CD4-positive, alpha-beta T cell (primary cell): ENCODE measurements at regions of chr3 and their contacts with region 1.

Region 1: DNA sequence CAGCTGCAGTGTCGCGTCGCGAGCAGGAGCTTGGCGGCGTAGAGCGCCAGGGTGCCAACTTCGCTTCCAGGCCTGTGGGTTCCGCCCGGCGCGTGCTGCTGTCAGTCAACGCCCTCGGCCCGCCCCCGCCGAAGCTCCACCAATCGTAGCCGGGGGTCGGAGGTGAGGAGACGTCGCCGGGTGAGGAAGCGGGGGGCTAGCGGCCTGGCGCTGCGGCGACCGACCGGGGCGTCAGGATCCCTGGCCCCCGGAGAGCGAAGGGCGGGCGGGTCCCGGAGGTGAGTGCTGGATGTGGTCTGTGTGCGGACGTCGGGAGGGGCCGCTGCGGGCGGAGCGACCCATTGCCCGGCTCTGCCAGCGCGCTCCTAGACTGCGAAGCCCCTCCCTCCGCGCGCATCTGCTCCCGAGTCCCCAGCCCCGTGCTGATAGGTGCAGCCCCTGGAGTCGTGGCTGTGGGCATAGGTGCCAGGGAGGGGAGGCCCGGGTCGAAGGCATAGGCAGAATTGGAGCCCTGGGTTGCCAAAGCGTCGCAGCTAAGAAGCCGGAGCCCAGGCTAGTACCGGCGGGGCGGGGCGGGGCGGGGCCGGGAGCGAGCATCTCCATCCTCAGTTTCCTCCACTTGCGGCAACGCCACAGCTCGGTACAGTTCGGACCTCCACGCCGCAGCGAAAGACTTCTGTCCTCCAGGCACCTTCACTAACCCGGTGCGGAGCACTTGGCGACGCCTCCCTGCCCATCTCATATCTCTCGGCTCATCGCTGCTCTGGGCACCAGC is at the start of gene NXPE3:
- DNase-seq: peak; percentile 88 to 96 (median 93)
- ATAC-seq: peak; percentile 91
- H3K4me3 ChIP-seq: peak within 1 kb of the TSS; percentile 89
- H3K4me3 Mint-ChIP-seq: peak within 1 kb of the TSS; percentile 98
- H3K27ac ChIP-seq: peak within 1 kb of the TSS; percentile 87 to 89
- H3K27ac Mint-ChIP-seq: peak within 1 kb of the TSS; percentile 100
- H3K4me1 ChIP-seq: peaks cover 26% of the 10 kb centered on the region
- H3K4me1 Mint-ChIP-seq: peaks cover 62% of the 10 kb centered on the region
- H3K27me3 ChIP-seq: no peaks in the 10 kb centered on the region
- H3K27me3 Mint-ChIP-seq: no peaks in the 10 kb centered on the region
- CTCF ChIP-seq: no peak
- total RNA-seq, gene NXPE3: 37.4 to 37.5 TPM

Region 2: GRCh38 chr3:101656651-101657050 is 122.6 kb before region 1 on chr3:
- CTCF ChIA-PET with region 1: no interaction called
- POLR2A ChIA-PET with region 1: no interaction called
- intact Hi-C with region 1: no loop called
- DNase-seq: no peak
- ATAC-seq: no peak
- H3K4me3 ChIP-seq: no peak overlapping the region
- H3K4me3 Mint-ChIP-seq: no peak overlapping the region
- H3K27ac ChIP-seq: no peak overlapping the region
- H3K27ac Mint-ChIP-seq: no peak overlapping the region
- H3K4me1 ChIP-seq: no peaks in the 10 kb centered on the region
- H3K4me1 Mint-ChIP-seq: peaks cover 5% of the 10 kb centered on the region
- H3K27me3 ChIP-seq: no peaks in the 10 kb centered on the region
- H3K27me3 Mint-ChIP-seq: no peaks in the 10 kb centered on the region
- CTCF ChIP-seq: no peak

Region 3: GRCh38 chr3:101676765-101677435 is 102.3 kb before region 1 on chr3 and contains the start of gene ZBTB11:
- CTCF ChIA-PET with region 1: no interaction called
- POLR2A ChIA-PET with region 1: interaction called, 21 read pairs
- intact Hi-C with region 1: loop called in 1 of 2 experiments (anchors 2 kb)
- DNase-seq: peak; percentile 99 to 100 (median 100)
- ATAC-seq: peak; percentile 67
- H3K4me3 ChIP-seq: peak within 1 kb of the TSS; percentile 71
- H3K4me3 Mint-ChIP-seq: peak within 1 kb of the TSS; percentile 98
- H3K27ac ChIP-seq: peak within 1 kb of the TSS; percentile 97 to 99
- H3K27ac Mint-ChIP-seq: peak within 1 kb of the TSS; percentile 100
- H3K4me1 ChIP-seq: peaks cover 36% of the 10 kb centered on the region
- H3K4me1 Mint-ChIP-seq: peaks cover 60% of the 10 kb centered on the region
- H3K27me3 ChIP-seq: no peaks in the 10 kb centered on the region
- H3K27me3 Mint-ChIP-seq: peaks cover 3% of the 10 kb centered on the region
- CTCF ChIP-seq: no peak
- total RNA-seq, gene ZBTB11: 73.5 to 76.6 TPM

Region 4: GRCh38 chr3:101724329-101725193 is 54.7 kb before region 1 on chr3 and contains the start of gene CEP97:
- CTCF ChIA-PET with region 1: interaction called, 5 read pairs
- POLR2A ChIA-PET with region 1: interaction called, 51 read pairs
- intact Hi-C with region 1: loop called in 1 of 2 experiments (anchors 2 kb)
- DNase-seq: peak; percentile 75 to 92 (median 80)
- ATAC-seq: peak; percentile 94
- H3K4me3 ChIP-seq: peak within 1 kb of the TSS; percentile 99
- H3K4me3 Mint-ChIP-seq: peak within 1 kb of the TSS; percentile 97
- H3K27ac ChIP-seq: peak within 1 kb of the TSS; percentile 75 to 81
- H3K27ac Mint-ChIP-seq: peak within 1 kb of the TSS; percentile 89
- H3K4me1 ChIP-seq: peaks cover 42% of the 10 kb centered on the region
- H3K4me1 Mint-ChIP-seq: peaks cover 46% of the 10 kb centered on the region
- H3K27me3 ChIP-seq: no peaks in the 10 kb centered on the region
- H3K27me3 Mint-ChIP-seq: no peaks in the 10 kb centered on the region
- CTCF ChIP-seq: no peak
- total RNA-seq, gene CEP97: 6.3 to 6.6 TPM

Region 5: DNA sequence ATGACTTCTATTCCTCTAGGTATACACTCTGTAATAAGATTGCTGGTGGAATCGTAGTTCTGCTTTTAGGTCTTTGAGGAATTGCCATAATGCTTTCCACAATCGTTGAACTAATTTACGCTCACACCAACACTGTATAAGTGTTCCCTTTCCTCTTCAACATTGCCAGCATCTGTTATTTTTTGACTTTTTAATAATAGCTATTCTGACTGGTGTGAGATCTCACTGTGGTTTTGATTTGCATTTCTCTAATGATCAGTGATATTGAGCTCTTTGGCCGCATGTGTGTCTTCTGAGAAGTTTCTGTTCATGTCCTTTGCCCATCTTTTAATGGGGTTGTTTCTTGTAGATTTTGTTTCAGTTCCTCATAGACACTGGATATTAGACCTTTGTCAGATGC is 12.5 kb after region 1 on chr3:
- CTCF ChIA-PET with region 1: no interaction called
- POLR2A ChIA-PET with region 1: interaction called, 10 read pairs
- intact Hi-C with region 1: no loop called
- DNase-seq: no peak
- ATAC-seq: no peak
- H3K4me3 ChIP-seq: no peak overlapping the region
- H3K4me3 Mint-ChIP-seq: no peak overlapping the region
- H3K27ac ChIP-seq: no peak overlapping the region
- H3K27ac Mint-ChIP-seq: peak overlapping the region; percentile 47
- H3K4me1 ChIP-seq: peaks cover 17% of the 10 kb centered on the region
- H3K4me1 Mint-ChIP-seq: peaks cover 83% of the 10 kb centered on the region
- H3K27me3 ChIP-seq: no peaks in the 10 kb centered on the region
- H3K27me3 Mint-ChIP-seq: no peaks in the 10 kb centered on the region
- CTCF ChIP-seq: no peak